ENCODE measurements at regions of chr4 and their contacts with region 1.

Region 1: GRCh38 chr4:178296669-178297068 is 854.4 kb upstream of the AGA start:
- DNase-seq: no peak
- H3K4me3 ChIP-seq: no peak overlapping the region
- CTCF ChIP-seq: no peak

Region 2: DNA sequence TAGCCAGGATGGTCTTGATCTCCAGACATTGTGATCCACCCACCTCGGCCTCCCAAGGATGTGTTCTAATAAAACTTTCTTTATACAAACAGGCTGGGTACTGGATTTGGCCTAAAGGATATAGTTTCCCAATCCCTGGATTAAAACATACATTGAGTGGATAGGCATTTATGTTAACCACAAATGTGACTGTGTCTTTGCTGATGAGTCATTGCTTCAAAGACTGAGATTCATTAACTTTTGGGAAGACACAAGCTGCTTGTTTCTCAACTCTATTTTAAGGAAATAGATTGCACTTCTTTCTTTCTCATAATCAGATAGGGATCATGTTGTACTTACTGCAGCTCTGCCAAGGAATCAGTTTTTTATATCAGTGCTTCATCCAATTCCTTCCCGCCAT is 723.2 kb before region 1 on chr4:
- in situ Hi-C with region 1: no loop called
- DNase-seq: peak; percentile 42
- H3K4me3 ChIP-seq: no peak overlapping the region
- CTCF ChIP-seq: no peak

Region 3: DNA sequence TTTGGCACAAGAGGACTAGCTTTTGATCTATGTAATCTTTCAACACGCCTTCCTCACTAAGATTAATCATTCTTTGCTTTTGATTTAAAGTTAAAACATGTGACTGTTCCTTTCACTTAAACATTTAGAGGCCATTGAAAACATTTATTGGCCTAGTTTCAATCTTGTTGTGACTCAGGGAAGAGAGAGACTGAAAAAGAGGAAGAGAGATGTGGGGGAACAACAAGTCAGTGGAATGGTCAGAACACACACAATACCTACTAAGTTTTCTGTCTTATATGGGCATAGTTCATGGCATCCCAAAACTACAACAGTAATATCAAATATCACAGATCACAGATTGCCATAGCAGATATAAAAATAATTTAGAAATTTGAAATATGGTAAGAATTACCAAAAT is 41.5 kb before region 1 on chr4:
- in situ Hi-C with region 1: no loop called
- DNase-seq: no peak
- H3K4me3 ChIP-seq: no peak overlapping the region
- CTCF ChIP-seq: no peak

Region 4: DNA sequence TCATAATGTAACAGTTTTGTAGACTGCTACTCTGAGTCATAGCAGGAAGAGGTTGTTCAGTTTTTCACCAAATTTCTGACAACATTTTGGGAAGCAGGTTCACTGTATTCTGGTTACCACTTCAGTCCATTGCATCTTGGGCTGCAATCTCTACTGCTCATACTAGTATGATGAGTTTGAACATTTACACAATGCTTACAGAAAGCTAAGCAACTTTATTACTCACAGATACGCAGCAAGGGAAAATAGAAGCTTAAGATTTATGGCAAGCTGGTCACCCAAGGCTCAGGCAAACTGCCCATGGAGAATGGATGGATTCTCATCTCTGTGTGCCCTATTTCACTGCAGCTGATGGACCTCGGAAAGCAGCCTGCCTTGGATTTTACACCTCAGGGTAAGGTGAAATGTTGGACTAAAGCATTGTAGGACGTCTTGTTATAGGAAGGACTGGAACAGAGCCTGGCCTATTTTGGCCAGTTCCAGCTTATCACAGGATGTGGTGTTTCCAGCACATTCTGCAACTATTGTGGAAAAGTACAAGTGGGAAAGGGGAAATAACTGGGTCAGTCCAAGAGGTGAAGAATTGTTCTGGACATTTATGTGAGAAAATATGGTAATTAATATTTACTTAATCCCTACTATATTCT is 32.7 kb after region 1 on chr4:
- in situ Hi-C with region 1: loop called (anchors 5 kb)
- DNase-seq: no peak
- H3K4me3 ChIP-seq: no peak overlapping the region
- CTCF ChIP-seq: no peak

Region 5: DNA sequence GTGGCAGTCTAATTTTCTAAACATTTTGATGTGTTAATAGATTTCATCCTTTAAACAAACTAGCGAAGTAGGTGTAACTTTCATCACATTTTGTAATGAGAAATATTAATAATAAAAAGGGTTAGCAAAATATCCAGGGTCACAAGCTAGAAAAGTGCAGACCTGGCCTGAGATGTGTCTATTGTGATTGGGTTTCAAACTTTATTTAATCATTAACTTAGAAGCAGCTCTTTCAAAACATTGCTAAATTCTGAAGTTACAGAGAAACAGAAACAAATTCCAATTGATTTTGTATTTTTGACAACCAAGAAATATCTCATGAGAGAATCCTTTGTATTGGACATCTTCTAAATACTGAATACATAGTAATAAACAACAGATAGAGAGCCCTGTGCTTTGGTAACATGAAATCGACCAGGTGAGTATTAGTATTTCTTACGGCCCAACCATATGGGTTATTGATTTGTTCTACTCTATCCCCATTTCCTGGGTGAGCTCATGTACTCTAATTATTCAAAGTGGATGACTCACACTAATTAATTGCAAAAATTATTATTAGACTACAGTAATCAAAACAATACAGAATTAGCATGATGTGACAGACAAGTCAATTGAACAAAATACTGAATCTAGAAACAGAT is 239.4 kb after region 1 on chr4:
- in situ Hi-C with region 1: loop called (anchors 10 kb)
- DNase-seq: no peak
- H3K4me3 ChIP-seq: no peak overlapping the region
- CTCF ChIP-seq: no peak

Measured in astrocyte of the cerebellum (primary cell).